RWPE1 (cell line): ENCODE measurements at regions of chr15 and their contacts with region 1.

Region 1: GRCh38 chr15:72230196-72231065 is 559 bp downstream of the PKM start:
- DNase-seq: peak; percentile 74
- H3K27ac ChIP-seq: peak overlapping the region; percentile 99
- CTCF ChIP-seq: no peak

Region 2: GRCh38 chr15:72199711-72200212 is 30.7 kb before region 1 on chr15:
- CTCF ChIA-PET with region 1: interaction called, 10 read pairs
- POLR2A ChIA-PET with region 1: interaction called, 11 read pairs
- DNase-seq: peak; percentile 74
- H3K27ac ChIP-seq: peak overlapping the region; percentile 95
- CTCF ChIP-seq: peak; percentile 97